ENCODE measurements at regions of chr2 and their contacts with region 1.

Region 1: DNA sequence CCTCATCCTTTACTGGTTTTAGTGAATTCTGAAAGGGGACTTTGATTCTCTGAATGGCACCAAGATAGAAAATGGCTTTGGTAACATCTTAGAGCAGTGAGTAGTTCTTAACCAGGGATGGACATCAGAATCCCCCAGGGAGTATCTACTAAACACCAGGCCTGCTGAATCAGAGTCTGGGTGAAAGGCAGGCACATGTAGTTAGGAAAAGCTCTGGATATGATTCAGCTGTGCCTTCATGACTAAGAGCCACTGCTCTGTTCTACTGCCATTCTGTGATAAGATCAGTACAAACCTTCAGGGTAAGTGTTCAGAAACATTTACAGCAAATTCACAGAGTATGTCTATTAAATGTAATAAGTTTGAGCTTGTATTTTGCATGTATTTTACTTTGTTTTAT is 46.2 kb upstream of the B3GNT2 start:
- DNase-seq: no peak
- H3K4me3 Mint-ChIP-seq: no peak overlapping the region
- H3K27ac Mint-ChIP-seq: no peak overlapping the region
- H3K4me1 Mint-ChIP-seq: peaks cover 13% of the 10 kb centered on the region
- H3K27me3 Mint-ChIP-seq: no peaks in the 10 kb centered on the region

Region 2: DNA sequence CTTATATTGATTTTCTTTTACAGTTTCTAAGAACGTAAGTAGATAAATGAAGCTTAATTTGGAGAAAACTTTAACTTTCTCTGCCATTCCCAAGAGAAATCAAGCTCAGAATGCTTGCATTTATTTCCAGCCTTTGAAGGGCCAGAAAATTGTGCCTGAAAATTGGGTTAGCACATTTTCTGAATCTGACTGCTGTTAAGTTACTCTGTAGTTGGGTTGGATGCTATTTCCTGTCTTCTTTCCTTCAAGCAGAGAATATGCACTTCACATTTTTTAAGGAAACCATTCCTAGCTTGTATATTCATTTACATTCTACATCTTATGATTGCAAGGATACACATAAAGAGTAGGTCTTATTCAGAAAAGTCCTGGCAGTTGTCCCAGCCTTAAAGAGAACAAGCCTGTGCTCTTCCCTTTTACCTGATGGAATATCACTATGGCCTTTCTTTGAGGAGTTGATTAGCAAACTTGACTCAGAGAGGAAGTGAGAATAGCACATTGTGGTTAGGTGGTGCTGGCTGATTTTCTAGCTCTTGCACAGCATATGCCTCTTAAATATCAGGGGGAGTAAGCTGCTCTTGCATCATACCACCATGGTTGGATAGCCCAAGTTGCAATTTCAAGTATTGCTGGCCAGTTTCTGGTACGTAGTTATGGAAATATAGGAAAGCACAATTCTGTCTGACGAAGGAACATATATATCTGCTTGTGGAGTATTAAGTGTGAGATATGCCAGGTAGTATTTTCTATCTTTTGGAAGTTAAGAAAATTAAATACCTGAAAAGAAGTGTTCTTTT is 110.5 kb before region 1 on chr2:
- intact Hi-C with region 1: loop called (anchors 10 kb)
- DNase-seq: no peak
- H3K4me3 Mint-ChIP-seq: no peak overlapping the region
- H3K27ac Mint-ChIP-seq: no peak overlapping the region
- H3K4me1 Mint-ChIP-seq: peaks cover 15% of the 10 kb centered on the region
- H3K27me3 Mint-ChIP-seq: no peaks in the 10 kb centered on the region

Region 3: GRCh38 chr2:62110415-62111025 is 39.2 kb before region 1 on chr2:
- intact Hi-C with region 1: no loop called
- DNase-seq: no peak
- H3K4me3 Mint-ChIP-seq: no peak overlapping the region
- H3K27ac Mint-ChIP-seq: no peak overlapping the region
- H3K4me1 Mint-ChIP-seq: no peaks in the 10 kb centered on the region
- H3K27me3 Mint-ChIP-seq: no peaks in the 10 kb centered on the region

Region 4: DNA sequence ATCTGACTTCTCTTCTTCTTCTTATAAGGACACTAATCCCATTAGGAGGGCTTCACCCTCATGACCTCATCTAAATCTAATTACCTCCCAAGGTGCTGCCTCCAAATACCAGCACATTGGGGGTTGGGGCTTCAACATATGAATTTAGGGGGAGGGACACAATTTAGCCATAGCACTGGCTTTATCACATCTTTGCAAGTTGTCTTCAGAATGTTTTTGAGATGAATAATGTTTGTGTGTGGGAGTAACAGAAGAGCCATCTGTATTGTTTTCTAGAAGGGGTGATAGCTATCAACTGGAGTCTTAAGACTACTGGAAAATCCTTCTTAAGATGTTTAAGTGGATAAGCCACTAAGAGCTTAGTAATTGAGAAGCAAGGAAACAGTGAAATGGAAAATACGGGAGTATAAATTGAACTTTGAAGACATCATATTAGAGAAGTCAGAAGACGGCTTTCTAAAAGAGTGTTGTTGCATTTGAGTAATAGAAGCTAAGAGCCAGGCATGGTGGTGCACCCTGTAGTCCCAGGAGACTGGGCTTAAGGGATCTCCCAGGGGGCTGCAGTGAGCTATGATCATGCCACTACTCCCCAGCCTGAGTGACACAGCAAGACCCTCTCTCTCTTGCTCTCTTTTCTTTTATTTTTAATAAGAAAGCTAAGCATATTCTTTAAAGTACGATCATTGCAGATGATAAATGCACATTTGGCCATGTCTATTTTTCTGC is 13.6 kb after region 1 on chr2:
- intact Hi-C with region 1: no loop called
- DNase-seq: no peak
- H3K4me3 Mint-ChIP-seq: no peak overlapping the region
- H3K27ac Mint-ChIP-seq: no peak overlapping the region
- H3K4me1 Mint-ChIP-seq: peaks cover 8% of the 10 kb centered on the region
- H3K27me3 Mint-ChIP-seq: no peaks in the 10 kb centered on the region

Measured in activated T-helper 2 cell treated with anti-CD3 and anti-CD28 coated beads, Interferon-gamma antibody, Interleukin-2, Interleukin-4, amounts not matched to agents 10 μg/mL and 5 μg/mL and 100 μg/mL, durations not matched to agents 14 hours and 24 hours and 36 hours (primary cell).